MCF 10A (cell line): ENCODE measurements at regions of chr14 and their contacts with region 1.

Region 1: DNA sequence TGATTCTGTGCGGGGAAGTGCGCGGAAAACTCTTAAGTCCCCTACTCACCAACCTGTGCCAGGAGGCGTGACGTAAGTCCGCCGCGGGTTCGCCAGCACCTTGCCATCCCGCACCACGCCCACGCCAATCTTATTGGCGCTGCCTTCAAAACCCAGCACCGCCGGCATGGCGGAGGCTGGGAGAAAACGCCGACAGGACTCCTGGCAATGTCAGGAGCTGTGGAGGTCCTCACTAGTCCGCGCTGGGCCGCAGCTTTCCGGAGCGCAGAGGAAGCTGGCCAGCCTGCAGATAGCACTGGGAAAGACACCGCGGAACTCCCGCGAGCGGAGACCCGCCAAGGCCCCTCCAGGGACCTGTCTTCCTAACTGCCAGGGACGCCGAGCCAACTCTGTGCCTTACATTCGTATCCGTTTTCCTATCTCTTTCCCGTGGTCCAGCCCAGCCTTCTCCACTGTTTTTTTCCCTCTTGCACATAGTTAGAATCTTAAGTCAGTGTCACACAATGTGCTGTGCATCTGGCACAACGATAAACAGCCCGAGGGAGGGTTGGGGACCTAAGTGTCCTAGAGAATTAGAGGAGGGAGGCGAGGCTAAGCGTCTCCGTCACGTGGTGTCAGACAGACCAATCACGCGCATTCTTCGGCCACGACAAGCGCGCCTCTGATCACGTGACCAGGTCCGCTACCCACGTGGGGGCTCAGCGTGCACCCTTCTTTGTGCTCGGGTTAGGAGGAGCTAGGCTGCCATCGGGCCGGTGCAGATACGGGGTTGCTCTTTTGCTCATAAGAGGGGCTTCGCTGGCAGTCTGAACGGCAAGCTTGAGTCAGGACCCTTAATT is at the starts of genes APEX1 and OSGEP:
- DNase-seq: peak; percentile 99
- H3K4me3 Mint-ChIP-seq: no peak within 1 kb of the TSS
- H3K27ac Mint-ChIP-seq: no peak within 1 kb of the TSS
- H3K4me1 Mint-ChIP-seq: peaks cover 7% of the 10 kb centered on the region
- H3K27me3 Mint-ChIP-seq: no peaks in the 10 kb centered on the region
- CTCF ChIP-seq: no peak
- total RNA-seq, gene APEX1: 140 and 168 TPM in 2 replicates
- total RNA-seq, gene OSGEP: 27.2 and 34.7 TPM in 2 replicates

Region 2: GRCh38 chr14:20332788-20333493 is 121.8 kb before region 1 on chr14 and contains the start of gene CCNB1IP1:
- CTCF ChIA-PET with region 1: interaction called, 6 read pairs
- POLR2A ChIA-PET with region 1: interaction called, 22 read pairs
- intact Hi-C with region 1: no loop called
- DNase-seq: peak; percentile 94
- H3K4me3 Mint-ChIP-seq: peak within 1 kb of the TSS; percentile 93
- H3K27ac Mint-ChIP-seq: peak within 1 kb of the TSS; percentile 94
- H3K4me1 Mint-ChIP-seq: peaks cover 25% of the 10 kb centered on the region
- H3K27me3 Mint-ChIP-seq: no peaks in the 10 kb centered on the region
- CTCF ChIP-seq: no peak
- total RNA-seq, gene CCNB1IP1: 105 and 108 TPM in 2 replicates

Region 3: DNA sequence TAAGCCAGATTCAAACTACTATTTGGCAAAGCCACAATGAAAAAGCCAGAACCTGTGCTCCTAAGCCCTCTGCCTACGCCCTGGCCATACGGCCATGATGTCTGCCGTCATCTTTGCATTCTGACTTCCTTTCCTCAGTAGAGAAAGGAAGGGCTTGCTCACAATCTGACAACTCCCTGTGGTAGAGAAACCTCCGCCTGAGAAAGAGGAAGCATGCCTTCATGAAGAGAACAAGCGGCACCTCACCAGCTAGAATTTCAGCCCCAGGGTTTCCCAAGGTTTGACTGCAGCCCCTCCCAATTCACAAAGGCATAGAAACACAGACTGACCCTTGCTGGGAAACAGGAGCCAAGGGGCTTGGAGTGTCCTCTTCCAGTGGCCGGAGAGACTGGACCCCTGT is 67.2 kb before region 1 on chr14:
- CTCF ChIA-PET with region 1: no interaction called
- POLR2A ChIA-PET with region 1: no interaction called
- intact Hi-C with region 1: no loop called
- DNase-seq: no peak
- H3K4me3 Mint-ChIP-seq: no peak overlapping the region
- H3K27ac Mint-ChIP-seq: no peak overlapping the region
- H3K4me1 Mint-ChIP-seq: no peaks in the 10 kb centered on the region
- H3K27me3 Mint-ChIP-seq: no peaks in the 10 kb centered on the region
- CTCF ChIP-seq: no peak

Region 4: GRCh38 chr14:20400965-20401593 is 53.7 kb before region 1 on chr14:
- CTCF ChIA-PET with region 1: interaction called, 3 read pairs
- POLR2A ChIA-PET with region 1: interaction called, 20 read pairs
- intact Hi-C with region 1: no loop called
- DNase-seq: peak; percentile 84
- H3K4me3 Mint-ChIP-seq: peak overlapping the region; percentile 51
- H3K27ac Mint-ChIP-seq: peak overlapping the region; percentile 94
- H3K4me1 Mint-ChIP-seq: peaks cover 14% of the 10 kb centered on the region
- H3K27me3 Mint-ChIP-seq: no peaks in the 10 kb centered on the region
- CTCF ChIP-seq: no peak

Region 5: GRCh38 chr14:20413045-20413799 is 41.5 kb before region 1 on chr14 and contains the start of gene TEP1:
- CTCF ChIA-PET with region 1: interaction called, 25 read pairs
- POLR2A ChIA-PET with region 1: interaction called, 77 read pairs
- intact Hi-C with region 1: loop called (anchors 1 kb)
- DNase-seq: peak; percentile 87
- H3K4me3 Mint-ChIP-seq: peak within 1 kb of the TSS; percentile 77
- H3K27ac Mint-ChIP-seq: peak within 1 kb of the TSS; percentile 49
- H3K4me1 Mint-ChIP-seq: peaks cover 7% of the 10 kb centered on the region
- H3K27me3 Mint-ChIP-seq: no peaks in the 10 kb centered on the region
- CTCF ChIP-seq: no peak
- total RNA-seq, gene TEP1: 20.4 and 22.7 TPM in 2 replicates

Region 6: GRCh38 chr14:20440882-20441281 is 13.9 kb before region 1 on chr14:
- CTCF ChIA-PET with region 1: interaction called, 7 read pairs
- POLR2A ChIA-PET with region 1: interaction called, 20 read pairs
- intact Hi-C with region 1: no loop called
- DNase-seq: no peak
- H3K4me3 Mint-ChIP-seq: no peak overlapping the region
- H3K27ac Mint-ChIP-seq: no peak overlapping the region
- H3K4me1 Mint-ChIP-seq: no peaks in the 10 kb centered on the region
- H3K27me3 Mint-ChIP-seq: no peaks in the 10 kb centered on the region
- CTCF ChIP-seq: no peak

Region 7: DNA sequence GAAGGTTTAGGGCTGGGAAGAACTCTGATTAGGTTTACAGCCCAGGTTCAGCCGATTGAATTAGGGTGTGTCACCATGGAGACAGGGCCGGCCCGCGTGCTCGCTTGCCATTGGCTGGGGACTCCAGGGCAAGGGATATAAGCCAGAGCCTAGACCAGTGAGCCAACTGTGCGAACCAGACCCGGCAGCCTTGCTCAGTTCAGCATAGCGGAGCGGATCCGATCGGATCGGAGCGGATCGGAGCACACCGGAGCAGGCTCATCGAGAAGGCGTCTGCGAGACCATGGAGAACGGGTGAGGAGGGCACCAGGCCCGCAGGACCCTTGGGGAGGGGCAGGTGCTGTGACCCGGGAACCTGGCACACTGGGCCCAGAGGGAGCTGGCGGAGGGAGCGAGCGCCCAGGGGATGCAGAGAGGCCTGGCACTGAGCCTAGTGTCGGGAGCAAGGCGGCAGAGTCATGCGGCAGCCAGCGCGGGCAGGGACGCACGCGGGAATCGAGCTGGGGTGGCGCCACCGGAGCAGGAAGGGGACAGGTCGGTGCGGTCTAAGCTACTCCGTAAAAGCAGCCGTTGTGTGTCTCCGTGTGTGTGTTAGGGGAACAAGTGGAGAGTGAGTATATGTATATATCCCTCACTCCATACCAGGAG is 14.6 kb after region 1 on chr14 and contains the start of gene PNP:
- CTCF ChIA-PET with region 1: interaction called, 3 read pairs
- POLR2A ChIA-PET with region 1: interaction called, 81 read pairs
- intact Hi-C with region 1: no loop called
- DNase-seq: peak; percentile 91
- H3K4me3 Mint-ChIP-seq: peak within 1 kb of the TSS; percentile 93
- H3K27ac Mint-ChIP-seq: peak within 1 kb of the TSS; percentile 95
- H3K4me1 Mint-ChIP-seq: peaks cover 33% of the 10 kb centered on the region
- H3K27me3 Mint-ChIP-seq: no peaks in the 10 kb centered on the region
- CTCF ChIP-seq: no peak
- total RNA-seq, gene PNP: 56.0 and 63.9 TPM in 2 replicates

Region 8: DNA sequence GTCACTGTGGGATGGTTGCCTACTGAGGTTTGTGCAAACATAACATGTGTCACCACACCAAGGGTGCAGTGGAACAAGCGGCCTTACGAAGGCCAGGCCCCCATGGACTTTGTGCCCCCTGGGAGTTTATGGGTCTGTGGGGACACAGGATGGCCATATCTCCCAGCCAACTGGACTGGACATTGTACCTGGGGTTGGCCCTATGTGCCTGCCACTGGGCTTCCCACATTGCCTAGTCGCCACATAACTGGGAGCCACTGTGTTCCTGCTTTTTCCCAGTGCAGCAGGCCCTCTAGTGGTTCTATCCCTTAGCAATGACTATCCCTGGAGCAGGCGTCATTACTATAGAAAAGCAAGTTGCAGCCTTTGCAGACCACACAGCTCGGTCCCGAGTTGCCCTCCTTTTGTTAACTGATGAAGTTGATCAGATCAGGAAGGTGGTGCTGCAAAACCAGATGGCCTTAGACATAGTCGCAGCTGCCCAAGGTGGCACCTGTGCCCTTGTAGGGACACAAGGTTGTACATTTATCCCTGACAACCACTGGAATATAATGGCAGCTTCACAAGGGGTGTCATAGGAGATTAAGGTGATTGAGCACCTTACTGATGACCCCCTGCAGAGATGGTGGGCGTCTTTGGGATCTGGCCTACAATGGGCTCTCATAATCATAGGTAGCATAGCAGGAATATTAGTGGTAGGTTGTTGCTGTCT is 151.6 kb after region 1 on chr14:
- CTCF ChIA-PET with region 1: interaction called, 3 read pairs
- POLR2A ChIA-PET with region 1: interaction called, 26 read pairs
- intact Hi-C with region 1: loop called (anchors 1 kb)
- DNase-seq: peak; percentile 60
- H3K4me3 Mint-ChIP-seq: no peak overlapping the region
- H3K27ac Mint-ChIP-seq: no peak overlapping the region
- H3K4me1 Mint-ChIP-seq: peaks cover 9% of the 10 kb centered on the region
- H3K27me3 Mint-ChIP-seq: no peaks in the 10 kb centered on the region
- CTCF ChIP-seq: peak; percentile 54

Region 9: DNA sequence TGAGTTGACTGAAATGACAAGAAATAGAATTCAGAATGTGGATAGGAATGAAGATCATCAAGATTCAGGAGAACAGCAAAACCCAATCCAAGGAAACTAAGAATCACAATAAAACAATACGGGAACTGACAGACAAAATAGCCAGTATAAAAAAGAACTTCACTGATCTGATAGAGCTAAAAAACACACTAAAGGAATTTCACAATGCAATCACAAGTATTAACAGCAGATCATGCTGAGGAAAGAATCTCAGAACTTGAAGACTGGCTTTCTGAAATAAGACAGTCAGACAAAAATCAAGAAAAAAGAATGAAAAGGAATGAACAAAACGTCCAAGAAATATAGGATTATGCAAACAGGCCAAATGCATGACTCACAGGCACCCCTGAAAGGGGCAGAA is 716.4 kb after region 1 on chr14:
- CTCF ChIA-PET with region 1: no interaction called
- POLR2A ChIA-PET with region 1: no interaction called
- intact Hi-C with region 1: no loop called
- DNase-seq: peak; percentile 8
- H3K4me3 Mint-ChIP-seq: no peak overlapping the region
- H3K27ac Mint-ChIP-seq: no peak overlapping the region
- H3K4me1 Mint-ChIP-seq: peaks cover 8% of the 10 kb centered on the region
- H3K27me3 Mint-ChIP-seq: peaks cover 43% of the 10 kb centered on the region
- CTCF ChIP-seq: no peak